PC-9 (cell line): ENCODE measurements at regions of chr3 and their contacts with region 1.

Region 1: GRCh38 chr3:159266779-159267178 is 464.9 kb downstream of the MFSD1 start:
- DNase-seq: peak in 1 of 2 experiments; percentile 62
- H3K4me3 ChIP-seq: no peak overlapping the region
- H3K27ac ChIP-seq: no peak overlapping the region
- H3K4me1 ChIP-seq: no peaks in the 10 kb centered on the region
- H3K27me3 ChIP-seq: no peaks in the 10 kb centered on the region
- CTCF ChIP-seq: peak; percentile 67

Region 2: DNA sequence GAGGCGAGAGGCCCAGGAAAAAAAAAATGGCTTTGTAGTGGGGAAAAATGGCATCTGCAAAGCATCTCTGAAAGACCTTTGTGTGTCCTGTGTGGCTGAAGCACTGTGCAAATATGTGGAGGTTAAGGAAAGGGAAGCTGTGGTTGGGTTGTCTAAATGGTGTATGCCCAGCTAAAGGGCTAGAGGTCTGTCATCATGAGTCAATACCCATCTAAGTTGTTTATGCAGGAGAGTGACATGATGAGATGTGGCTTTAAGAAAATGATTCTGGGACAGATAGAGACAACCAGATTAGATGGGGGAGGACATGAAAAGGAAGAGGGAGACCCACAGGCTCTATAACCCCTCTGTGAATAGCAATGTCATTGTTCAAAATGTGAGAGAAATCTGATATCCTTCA is 184.3 kb before region 1 on chr3:
- CTCF ChIA-PET with region 1: no interaction called
- POLR2A ChIA-PET with region 1: no interaction called
- intact Hi-C with region 1: no loop called
- DNase-seq: no peak
- H3K4me3 ChIP-seq: no peak overlapping the region
- H3K27ac ChIP-seq: no peak overlapping the region
- H3K4me1 ChIP-seq: no peaks in the 10 kb centered on the region
- H3K27me3 ChIP-seq: no peaks in the 10 kb centered on the region
- CTCF ChIP-seq: no peak

Region 3: DNA sequence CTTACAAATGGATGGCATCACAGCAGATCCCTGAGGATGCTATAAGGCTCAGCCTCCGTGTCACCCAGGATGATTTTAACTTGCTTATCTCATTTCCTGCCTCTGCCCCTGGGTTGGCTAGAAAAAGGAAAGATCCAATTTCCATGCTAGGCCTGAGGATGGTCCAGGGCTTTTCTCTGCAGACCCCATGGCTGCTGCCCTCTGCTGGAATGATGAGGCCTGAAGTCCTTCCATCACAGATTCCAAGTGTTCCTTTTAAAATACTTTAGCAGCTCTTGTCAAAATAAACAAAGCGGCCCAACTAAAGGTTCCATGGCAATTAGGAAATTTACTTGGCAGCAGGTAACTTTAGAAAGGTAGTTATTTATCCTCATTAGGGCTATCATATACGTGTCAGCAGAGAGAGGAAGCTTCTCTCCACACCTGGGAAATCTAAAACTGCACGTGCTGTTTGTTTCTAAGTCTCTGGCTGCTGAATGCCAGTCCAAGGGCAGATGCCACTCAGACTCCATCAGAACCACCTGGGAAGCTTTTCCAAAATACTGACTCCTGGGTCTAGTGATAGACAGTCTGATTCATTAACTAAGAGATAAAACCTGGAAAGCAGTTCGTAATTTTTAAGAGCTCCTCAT is 319.9 kb after region 1 on chr3:
- CTCF ChIA-PET with region 1: interaction called, 3 read pairs
- POLR2A ChIA-PET with region 1: no interaction called
- intact Hi-C with region 1: loop called (anchors 1 kb)
- DNase-seq: peak in 1 of 2 experiments; percentile 28
- H3K4me3 ChIP-seq: no peak overlapping the region
- H3K27ac ChIP-seq: no peak overlapping the region
- H3K4me1 ChIP-seq: no peaks in the 10 kb centered on the region
- H3K27me3 ChIP-seq: no peaks in the 10 kb centered on the region
- CTCF ChIP-seq: peak; percentile 66

Region 4: GRCh38 chr3:159929435-159930141 is 662.8 kb after region 1 on chr3:
- CTCF ChIA-PET with region 1: no interaction called
- POLR2A ChIA-PET with region 1: interaction called, 22 read pairs
- intact Hi-C with region 1: loop called (anchors 5 kb)
- DNase-seq: peak; percentile 51 to 93
- H3K4me3 ChIP-seq: peak overlapping the region; percentile 27; the same call in 1 of the 2 replicates
- H3K27ac ChIP-seq: peak overlapping the region; percentile 94
- H3K4me1 ChIP-seq: peaks cover 46% of the 10 kb centered on the region
- H3K27me3 ChIP-seq: no peaks in the 10 kb centered on the region
- CTCF ChIP-seq: peak; percentile 62

Region 5: DNA sequence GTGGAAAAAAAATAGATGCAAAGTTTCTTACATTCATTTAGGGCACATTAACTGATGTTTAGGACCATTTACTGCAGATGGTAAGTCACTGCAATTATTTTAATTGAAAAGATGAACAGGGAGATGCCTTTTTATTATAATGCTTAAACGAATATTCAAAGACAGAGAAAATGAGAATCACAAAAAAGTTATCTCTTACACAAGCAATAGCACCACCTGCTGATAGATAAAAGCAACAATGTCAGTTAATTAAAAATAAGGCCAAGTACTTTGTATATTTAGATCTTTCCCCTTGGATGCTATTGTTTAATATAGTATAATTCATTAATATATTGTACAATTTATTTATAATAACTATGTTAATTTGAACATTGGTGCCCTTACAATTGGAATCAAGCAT is 1076.4 kb after region 1 on chr3:
- CTCF ChIA-PET with region 1: no interaction called
- POLR2A ChIA-PET with region 1: no interaction called
- intact Hi-C with region 1: loop called (anchors 2 kb)
- DNase-seq: no peak
- H3K4me3 ChIP-seq: no peak overlapping the region
- H3K27ac ChIP-seq: no peak overlapping the region
- H3K4me1 ChIP-seq: no peaks in the 10 kb centered on the region
- H3K27me3 ChIP-seq: no peaks in the 10 kb centered on the region
- CTCF ChIP-seq: peak; percentile 77